GM10248 (cell line): ENCODE measurements at regions of chr1 and their contacts with region 1.

Region 1: GRCh38 chr1:89762779-89763648 is 57.8 kb upstream of the LRRC8D start:
- DNase-seq: peak; percentile 88
- CTCF ChIP-seq: peak; percentile 100

Region 2: GRCh38 chr1:89483010-89483756 is 279.8 kb before region 1 on chr1:
- CTCF ChIA-PET with region 1: interaction called, 43 read pairs
- POLR2A ChIA-PET with region 1: no interaction called
- DNase-seq: peak; percentile 56
- CTCF ChIP-seq: peak; percentile 70

Region 3: DNA sequence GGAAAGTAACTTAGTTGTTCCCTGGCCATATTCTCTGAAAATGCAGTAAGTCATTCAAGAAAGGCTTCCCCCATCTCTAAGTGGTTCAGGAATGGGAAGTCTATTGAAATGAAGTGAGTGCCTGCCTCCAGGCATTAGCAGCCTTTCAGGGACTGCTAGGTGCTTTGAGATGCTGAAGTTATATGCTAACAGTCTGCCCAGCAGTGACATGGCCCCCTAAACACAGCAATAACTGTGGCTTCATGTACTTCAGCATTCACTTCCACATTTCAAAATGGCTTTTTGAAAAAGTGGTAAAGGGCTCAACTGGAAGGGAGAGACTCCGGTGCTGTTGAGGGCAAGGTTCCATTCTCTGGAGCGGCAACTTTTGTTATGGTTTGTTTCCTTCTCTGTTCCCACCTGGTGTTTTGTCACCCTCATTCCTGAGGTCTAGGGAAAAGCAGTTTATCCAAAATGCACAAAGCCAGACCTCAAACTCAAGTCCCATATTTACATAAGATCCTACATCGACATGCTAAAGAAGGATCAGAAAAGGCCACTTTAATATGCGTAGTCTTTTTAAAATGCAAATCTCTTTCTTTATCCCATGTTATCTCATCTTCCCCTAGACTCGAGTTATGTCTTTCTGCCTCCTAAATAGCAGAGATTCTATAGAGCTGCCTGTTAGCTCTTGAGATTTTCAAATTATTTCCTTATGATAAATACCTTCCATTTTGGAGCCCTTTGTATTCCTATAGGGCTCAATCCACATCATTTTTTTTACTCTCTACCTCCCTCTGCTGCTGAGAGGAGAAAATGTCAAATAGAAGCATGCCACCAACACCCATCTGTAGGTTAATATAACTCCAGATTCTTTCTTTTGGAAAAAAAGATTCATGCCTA is 164.3 kb before region 1 on chr1:
- CTCF ChIA-PET with region 1: interaction called, 36 read pairs
- POLR2A ChIA-PET with region 1: no interaction called
- DNase-seq: peak; percentile 30
- CTCF ChIP-seq: peak; percentile 61

Region 4: GRCh38 chr1:89622895-89623294 is 140.1 kb before region 1 on chr1:
- CTCF ChIA-PET with region 1: interaction called, 105 read pairs
- POLR2A ChIA-PET with region 1: no interaction called
- DNase-seq: no peak
- CTCF ChIP-seq: no peak

Region 5: GRCh38 chr1:89670163-89670562 is 92.9 kb before region 1 on chr1:
- CTCF ChIA-PET with region 1: interaction called, 24 read pairs
- POLR2A ChIA-PET with region 1: no interaction called
- DNase-seq: peak; percentile 53
- CTCF ChIP-seq: no peak

Region 6: DNA sequence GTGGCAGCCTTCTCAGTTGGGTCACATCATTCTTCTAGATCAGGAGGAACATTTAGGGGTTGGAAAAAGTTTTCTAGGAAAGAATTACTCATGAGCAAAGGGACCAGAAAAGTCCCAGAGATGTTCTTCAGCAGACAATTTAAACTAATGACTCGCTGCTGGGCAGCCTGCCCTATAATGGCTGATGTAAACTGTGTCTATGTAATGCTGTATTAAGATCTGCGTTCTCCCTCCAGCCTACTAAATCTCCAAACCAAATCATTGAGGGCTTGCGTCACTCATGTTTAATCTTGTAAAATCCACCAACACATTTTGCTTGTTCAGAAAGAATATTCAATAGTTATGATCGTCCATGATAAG is 38.0 kb before region 1 on chr1:
- CTCF ChIA-PET with region 1: interaction called, 12 read pairs
- POLR2A ChIA-PET with region 1: no interaction called
- DNase-seq: no peak
- CTCF ChIP-seq: no peak

Region 7: GRCh38 chr1:89780721-89781120 is 17.7 kb after region 1 on chr1:
- CTCF ChIA-PET with region 1: interaction called, 45 read pairs
- POLR2A ChIA-PET with region 1: interaction called, 3 read pairs
- DNase-seq: no peak
- CTCF ChIP-seq: no peak